ENCODE measurements at regions of chr1 and their contacts with region 1.

Region 1: GRCh38 chr1:209692745-209693504 is 11.7 kb upstream of the HSD11B1 start:
- DNase-seq: peak; percentile 72
- ATAC-seq: peak; percentile 80
- H3K4me3 ChIP-seq: no peak overlapping the region
- H3K27ac ChIP-seq: no peak overlapping the region
- H3K4me1 ChIP-seq: peaks cover 8 to 24% of the 10 kb centered on the region in 2 experiments; a peak in 3 of 4 replicates
- H3K27me3 ChIP-seq: peaks cover 16% of the 10 kb centered on the region; the same call in 1 of the 2 replicates
- CTCF ChIP-seq: peak; percentile 68 to 98 (median 87)
- POLR2A ChIP-seq: no peak
- RAD21 ChIP-seq: peak; percentile 100

Region 2: DNA sequence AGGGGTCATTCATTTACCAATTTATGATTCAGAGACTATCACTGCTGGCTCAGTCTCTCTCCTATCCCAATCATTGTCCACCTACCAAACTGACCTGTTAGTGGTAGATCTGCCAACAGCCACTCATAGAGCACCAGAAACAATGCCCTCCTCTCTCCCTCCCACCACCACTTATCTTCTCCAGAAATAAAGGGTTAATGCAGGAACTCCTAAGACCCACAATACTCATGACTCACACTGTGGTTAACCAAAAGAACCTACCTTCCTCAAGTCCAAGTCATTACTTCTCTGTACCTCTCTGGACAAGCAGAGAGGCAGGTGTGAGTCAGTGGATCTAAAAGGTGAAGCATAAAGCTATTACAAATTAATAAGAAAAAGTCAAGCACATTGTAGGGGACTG is 150.3 kb before region 1 on chr1:
- CTCF ChIA-PET with region 1: no interaction called
- POLR2A ChIA-PET with region 1: no interaction called
- RAD21 ChIA-PET with region 1: no interaction called
- intact Hi-C with region 1: no loop called
- DNase-seq: peak; percentile 51
- ATAC-seq: peak; percentile 85
- H3K4me3 ChIP-seq: no peak overlapping the region
- H3K27ac ChIP-seq: no peak overlapping the region
- H3K4me1 ChIP-seq: peaks cover 0 to 13% of the 10 kb centered on the region in 2 experiments; a peak in 2 of 4 replicates
- H3K27me3 ChIP-seq: peaks cover 42% of the 10 kb centered on the region
- CTCF ChIP-seq: no peak
- POLR2A ChIP-seq: no peak
- RAD21 ChIP-seq: no peak

Region 3: DNA sequence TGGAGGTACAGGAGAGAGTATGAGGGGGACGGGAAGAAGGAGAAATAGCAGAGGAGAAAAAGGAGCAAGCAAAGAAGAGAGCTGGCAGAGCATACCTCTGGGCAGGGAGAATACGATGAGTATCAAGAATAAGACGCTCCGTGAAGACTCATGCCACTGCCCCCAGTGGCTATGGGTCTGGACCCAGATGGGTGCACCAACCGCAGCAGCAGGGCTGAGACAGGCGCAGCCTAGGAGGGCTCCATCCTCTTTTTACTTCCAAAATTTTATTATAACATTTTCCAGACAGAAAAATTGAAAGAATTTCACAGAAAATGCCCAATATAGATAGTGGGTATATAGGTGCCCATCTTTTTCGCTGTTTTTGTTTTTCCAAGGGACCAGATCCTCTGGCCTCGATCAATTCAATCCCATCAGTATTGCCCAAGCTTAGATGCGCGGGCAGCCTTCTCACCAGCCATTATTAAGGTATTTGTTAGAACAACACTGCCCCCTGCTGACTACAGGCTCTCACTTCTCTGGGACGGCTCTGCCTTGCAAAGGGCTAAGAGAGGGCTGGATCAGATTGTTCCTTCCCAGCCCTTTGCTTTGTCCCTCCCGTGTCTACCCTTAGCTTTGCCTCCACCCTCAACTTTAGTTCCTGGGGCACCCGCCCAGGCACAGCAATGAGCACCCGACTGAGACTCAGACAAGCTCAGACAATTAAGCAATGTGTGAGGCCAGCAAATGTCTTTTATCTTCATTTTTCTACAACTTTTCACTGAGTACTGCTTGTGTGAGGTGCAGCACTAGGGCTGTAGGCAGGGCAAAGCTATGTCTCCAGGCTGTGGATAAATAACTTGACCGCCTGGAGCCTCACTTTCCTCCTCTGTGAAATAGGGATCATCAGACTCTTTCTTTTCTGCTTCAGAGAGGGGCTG is 126.9 kb before region 1 on chr1:
- CTCF ChIA-PET with region 1: interaction called, 12 read pairs
- POLR2A ChIA-PET with region 1: no interaction called
- RAD21 ChIA-PET with region 1: interaction called in 1 of 2 experiments, 3 read pairs
- intact Hi-C with region 1: loop called (anchors 1 kb)
- DNase-seq: peak; percentile 78
- ATAC-seq: peak; percentile 96
- H3K4me3 ChIP-seq: no peak overlapping the region
- H3K27ac ChIP-seq: no peak overlapping the region
- H3K4me1 ChIP-seq: peaks cover 0 to 6% of the 10 kb centered on the region in 2 experiments; a peak in 1 of 4 replicates
- H3K27me3 ChIP-seq: peaks cover 10% of the 10 kb centered on the region; the same call in 1 of the 2 replicates
- CTCF ChIP-seq: peak; percentile 74 to 84 (median 83); a peak in 5 of 6 replicates
- POLR2A ChIP-seq: no peak
- RAD21 ChIP-seq: peak; percentile 83

Region 4: DNA sequence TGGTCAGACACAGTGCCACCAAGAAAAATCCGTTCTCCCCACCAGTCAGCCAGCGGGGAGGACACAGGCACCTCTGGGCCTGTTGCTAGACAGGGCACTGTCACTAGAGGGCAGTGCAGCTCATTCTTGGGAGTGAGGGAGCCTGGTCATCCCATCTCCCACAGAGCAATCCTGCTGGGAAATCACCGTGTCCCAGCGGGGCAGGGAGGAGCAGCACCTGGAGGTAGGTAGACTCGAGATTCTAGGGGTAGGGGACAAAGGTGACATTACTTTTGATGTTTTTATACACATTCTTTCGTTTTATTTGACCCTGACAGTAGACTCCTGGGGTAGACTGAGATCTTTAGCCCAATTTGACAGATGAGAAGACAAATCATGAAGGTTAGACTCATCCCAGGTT is 116.1 kb before region 1 on chr1:
- CTCF ChIA-PET with region 1: interaction called, 9 read pairs
- POLR2A ChIA-PET with region 1: no interaction called
- RAD21 ChIA-PET with region 1: no interaction called
- intact Hi-C with region 1: loop called (anchors 1 kb)
- DNase-seq: peak; percentile 73
- ATAC-seq: peak; percentile 100
- H3K4me3 ChIP-seq: no peak overlapping the region
- H3K27ac ChIP-seq: no peak overlapping the region
- H3K4me1 ChIP-seq: peaks cover 0 to 9% of the 10 kb centered on the region in 2 experiments; a peak in 1 of 4 replicates
- H3K27me3 ChIP-seq: 0 out of 2 replicates have a peak, but pooled peaks cover 16% of the 10 kb centered on the region
- CTCF ChIP-seq: peak; percentile 92 to 96 (median 93)
- POLR2A ChIP-seq: no peak
- RAD21 ChIP-seq: peak; percentile 95

Region 5: GRCh38 chr1:209601809-209602657 is 90.9 kb before region 1 on chr1:
- CTCF ChIA-PET with region 1: interaction called, 4 read pairs
- POLR2A ChIA-PET with region 1: no interaction called
- RAD21 ChIA-PET with region 1: no interaction called
- intact Hi-C with region 1: loop called (anchors 1 kb)
- DNase-seq: peak; percentile 52
- ATAC-seq: peak; percentile 100
- H3K4me3 ChIP-seq: no peak overlapping the region
- H3K27ac ChIP-seq: no peak overlapping the region
- H3K4me1 ChIP-seq: 0 out of 4 replicates have a peak, but pooled peaks cover 0 to 6% of the 10 kb centered on the region in 2 experiments
- H3K27me3 ChIP-seq: no peaks in the 10 kb centered on the region
- CTCF ChIP-seq: peak; percentile 79 to 93 (median 83)
- POLR2A ChIP-seq: no peak
- RAD21 ChIP-seq: peak; percentile 94

Region 6: DNA sequence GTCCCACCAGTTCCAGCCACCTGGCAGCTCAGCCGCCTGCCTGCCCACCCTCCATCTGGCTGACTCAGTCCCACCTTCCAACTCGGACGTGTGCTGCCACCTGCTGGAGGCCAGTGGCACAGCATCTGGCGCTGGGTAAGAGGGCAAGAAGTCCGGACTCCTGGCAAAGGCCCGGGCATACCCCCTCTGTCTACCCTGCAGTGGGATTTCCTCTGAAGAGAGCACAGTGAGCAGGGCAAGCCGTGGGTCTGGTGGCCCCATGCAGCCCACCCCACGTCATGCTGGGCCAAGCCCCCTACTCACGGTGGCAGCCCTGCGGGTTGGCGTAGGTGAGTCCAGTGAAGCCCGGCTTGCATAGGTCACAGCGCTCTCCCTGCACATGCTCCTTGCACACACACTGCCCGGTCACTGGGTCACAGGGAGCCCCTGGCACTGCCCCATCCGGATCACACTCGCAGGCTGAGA is 65.2 kb before region 1 on chr1:
- CTCF ChIA-PET with region 1: interaction called, 3 read pairs
- POLR2A ChIA-PET with region 1: no interaction called
- RAD21 ChIA-PET with region 1: no interaction called
- intact Hi-C with region 1: loop called (anchors 1 kb)
- DNase-seq: peak; percentile 35
- ATAC-seq: peak; percentile 96
- H3K4me3 ChIP-seq: no peak overlapping the region
- H3K27ac ChIP-seq: no peak overlapping the region
- H3K4me1 ChIP-seq: peaks cover 0 to 7% of the 10 kb centered on the region in 2 experiments; a peak in 2 of 4 replicates
- H3K27me3 ChIP-seq: no peaks in the 10 kb centered on the region
- CTCF ChIP-seq: peak; percentile 79 to 94 (median 91)
- POLR2A ChIP-seq: no peak
- RAD21 ChIP-seq: peak; percentile 84

Region 7: GRCh38 chr1:209652873-209653401 is 40.0 kb before region 1 on chr1:
- CTCF ChIA-PET with region 1: interaction called, 4 read pairs
- POLR2A ChIA-PET with region 1: interaction called, 3 read pairs
- RAD21 ChIA-PET with region 1: interaction called in 1 of 2 experiments, 3 read pairs
- intact Hi-C with region 1: loop called (anchors 2 kb)
- DNase-seq: peak; percentile 98
- ATAC-seq: peak; percentile 74
- H3K4me3 ChIP-seq: peak overlapping the region; percentile 46 to 57
- H3K27ac ChIP-seq: peak overlapping the region; percentile 74
- H3K4me1 ChIP-seq: peaks cover 71 to 98% of the 10 kb centered on the region in 2 experiments
- H3K27me3 ChIP-seq: no peaks in the 10 kb centered on the region
- CTCF ChIP-seq: no peak
- POLR2A ChIP-seq: no peak
- RAD21 ChIP-seq: no peak

Region 8: DNA sequence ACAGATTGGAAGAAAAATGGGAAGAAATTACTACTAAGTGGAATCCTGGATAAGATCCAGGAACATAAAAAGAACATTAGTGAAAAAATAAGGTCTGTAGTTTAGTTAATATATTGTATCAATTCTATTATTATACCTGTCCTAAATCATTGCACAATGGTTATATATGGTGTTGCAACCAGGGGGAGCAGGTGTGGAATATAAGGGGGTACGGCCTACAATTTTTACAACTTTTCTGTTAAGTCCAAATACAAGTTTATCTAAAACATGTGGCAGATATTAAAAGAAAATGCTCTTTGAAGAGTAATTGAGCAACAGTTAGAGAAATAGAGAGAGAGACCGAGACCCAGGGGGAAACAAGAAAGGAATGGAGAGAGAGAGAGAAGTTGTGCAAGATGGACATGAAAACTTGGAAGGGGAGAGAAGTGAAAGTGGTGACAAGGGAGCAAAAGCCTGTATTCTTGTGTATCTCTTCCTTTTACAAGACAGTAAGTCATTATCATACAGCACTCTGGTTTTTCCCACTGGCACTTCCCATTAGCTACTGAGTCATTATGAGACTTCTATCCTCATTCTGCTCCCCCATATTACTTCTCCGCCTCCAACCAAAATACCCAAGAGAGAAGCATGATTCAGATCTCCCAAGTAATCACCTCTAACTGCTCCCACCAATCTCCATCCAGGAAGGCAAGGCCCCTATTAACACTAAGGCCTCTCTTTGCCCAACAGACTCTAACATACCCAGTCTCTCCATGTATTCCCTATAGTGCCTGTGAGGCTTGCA is 40.7 kb after region 1 on chr1:
- CTCF ChIA-PET with region 1: no interaction called
- POLR2A ChIA-PET with region 1: no interaction called
- RAD21 ChIA-PET with region 1: no interaction called
- intact Hi-C with region 1: no loop called
- DNase-seq: no peak
- ATAC-seq: no peak
- H3K4me3 ChIP-seq: no peak overlapping the region
- H3K27ac ChIP-seq: no peak overlapping the region
- H3K4me1 ChIP-seq: no peaks in the 10 kb centered on the region
- H3K27me3 ChIP-seq: no peaks in the 10 kb centered on the region
- CTCF ChIP-seq: no peak
- POLR2A ChIP-seq: no peak
- RAD21 ChIP-seq: no peak